ENCODE measurements at regions of chr4 and their contacts with region 1.

Region 1: GRCh38 chr4:119212234-119212963 is at the start of gene USP53:
- DNase-seq: peak; percentile 93
- H3K4me3 ChIP-seq: peak within 1 kb of the TSS; percentile 96
- H3K27me3 ChIP-seq: no peaks in the 10 kb centered on the region
- CTCF ChIP-seq: no peak
- polyA plus RNA-seq, gene USP53: 70.5 and 148 TPM in 2 replicates

Region 2: GRCh38 chr4:119103263-119103662 is 109.1 kb before region 1 on chr4:
- CTCF ChIA-PET with region 1: interaction called, 5 read pairs
- POLR2A ChIA-PET with region 1: interaction called, 10 read pairs
- DNase-seq: peak; percentile 99
- H3K4me3 ChIP-seq: no peak overlapping the region
- H3K27me3 ChIP-seq: no peaks in the 10 kb centered on the region
- CTCF ChIP-seq: no peak

Region 3: GRCh38 chr4:119314356-119314755 is 102.0 kb after region 1 on chr4:
- CTCF ChIA-PET with region 1: no interaction called
- POLR2A ChIA-PET with region 1: no interaction called
- DNase-seq: no peak
- H3K4me3 ChIP-seq: no peak overlapping the region
- H3K27me3 ChIP-seq: no peaks in the 10 kb centered on the region
- CTCF ChIP-seq: peak; percentile 47

Measured in BJ (cell line).